ENCODE measurements at regions of chr2 and their contacts with region 1.

Region 1: DNA sequence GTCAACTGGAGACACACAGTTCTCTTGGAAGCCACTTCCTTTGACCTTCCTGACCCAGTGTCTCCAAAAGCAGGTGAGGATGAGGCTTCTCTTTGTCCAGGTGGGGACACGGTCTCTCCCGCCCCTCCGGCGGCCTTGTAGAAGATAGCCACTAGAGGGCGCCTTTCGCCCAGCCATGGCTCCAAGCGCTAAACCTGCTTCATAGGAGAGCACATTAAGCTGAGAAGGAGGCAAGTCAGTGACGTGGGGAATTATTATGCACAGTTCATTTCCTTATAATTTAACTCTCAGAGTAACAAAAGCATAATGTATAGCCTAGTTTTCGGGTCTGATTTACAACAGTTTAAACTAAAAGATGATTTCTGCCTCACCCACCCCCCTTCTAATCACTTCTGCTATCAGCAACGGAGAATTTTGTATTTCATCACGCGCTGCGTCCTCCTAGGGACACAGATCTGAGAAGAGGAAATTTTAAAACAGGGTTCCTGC is 208.7 kb downstream of the ICOS start:
- DNase-seq: peak; percentile 90
- H3K4me3 Mint-ChIP-seq: peak overlapping the region; percentile 65
- H3K27ac Mint-ChIP-seq: peak overlapping the region; percentile 22
- H3K4me1 Mint-ChIP-seq: peaks cover 9% of the 10 kb centered on the region
- H3K27me3 Mint-ChIP-seq: peaks cover 5% of the 10 kb centered on the region

Region 2: GRCh38 chr2:204239411-204240165 is 94.3 kb after region 1 on chr2:
- CTCF ChIA-PET with region 1: interaction called, 3 read pairs
- intact Hi-C with region 1: loop called (anchors 5 kb)
- DNase-seq: no peak
- H3K4me3 Mint-ChIP-seq: no peak overlapping the region
- H3K27ac Mint-ChIP-seq: no peak overlapping the region
- H3K4me1 Mint-ChIP-seq: peaks cover 14% of the 10 kb centered on the region
- H3K27me3 Mint-ChIP-seq: no peaks in the 10 kb centered on the region

Region 3: DNA sequence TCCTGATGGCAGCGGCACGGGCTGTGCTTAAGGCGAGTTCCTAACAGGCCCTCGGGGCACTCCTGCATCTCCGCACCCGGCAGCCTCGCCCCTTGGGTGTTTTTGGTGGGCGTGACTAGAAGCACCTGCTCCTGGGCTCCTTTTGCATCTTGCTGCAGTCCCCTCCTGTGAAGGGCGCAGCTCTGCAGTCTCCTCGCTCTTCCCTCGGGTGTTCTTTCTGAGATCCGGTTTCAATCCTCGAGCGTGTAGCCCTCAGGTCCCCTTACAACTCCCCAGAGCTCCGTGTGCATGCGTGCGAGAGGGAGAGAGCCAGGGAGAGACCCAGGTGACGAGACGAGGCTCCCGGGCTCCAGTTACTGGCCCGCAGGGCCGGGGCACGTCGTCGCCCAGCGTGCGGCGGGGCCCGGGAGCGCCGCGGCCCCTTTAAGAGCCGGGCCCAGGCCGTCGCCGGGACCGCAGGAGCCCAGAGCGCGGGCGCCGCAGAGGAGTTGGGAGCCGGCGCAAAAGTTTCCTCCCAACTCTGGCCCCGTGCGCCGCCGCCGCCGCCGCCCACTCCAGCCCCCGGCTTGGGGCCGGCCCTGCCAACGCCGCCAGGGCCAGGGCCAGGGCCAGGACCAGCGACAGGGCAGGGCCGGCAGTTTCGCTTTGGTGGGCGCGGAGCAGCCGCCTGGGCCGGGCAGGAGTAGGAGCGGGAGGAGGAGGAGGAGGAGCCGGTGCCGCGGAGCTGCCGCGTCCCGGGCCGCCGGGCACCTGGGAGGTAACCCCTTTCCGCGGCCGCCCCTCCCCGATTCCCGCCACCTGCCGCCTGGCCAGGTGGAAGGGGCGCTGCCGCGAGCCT is 399.9 kb after region 1 on chr2 and contains the start of gene PARD3B:
- CTCF ChIA-PET with region 1: no interaction called
- intact Hi-C with region 1: loop called (anchors 5 kb)
- DNase-seq: peak; percentile 41
- H3K4me3 Mint-ChIP-seq: peak within 1 kb of the TSS; percentile 82
- H3K27ac Mint-ChIP-seq: no peak within 1 kb of the TSS
- H3K4me1 Mint-ChIP-seq: peaks cover 12% of the 10 kb centered on the region
- H3K27me3 Mint-ChIP-seq: peaks cover 20% of the 10 kb centered on the region
- total RNA-seq, gene PARD3B: 0.15 to 0.43 TPM

Region 4: GRCh38 chr2:204691911-204692510 is 546.7 kb after region 1 on chr2:
- CTCF ChIA-PET with region 1: no interaction called
- intact Hi-C with region 1: loop called (anchors 1 kb)
- DNase-seq: peak; percentile 63
- H3K4me3 Mint-ChIP-seq: no peak overlapping the region
- H3K27ac Mint-ChIP-seq: no peak overlapping the region
- H3K4me1 Mint-ChIP-seq: peaks cover 7% of the 10 kb centered on the region
- H3K27me3 Mint-ChIP-seq: no peaks in the 10 kb centered on the region

Measured in activated naive CD4-positive, alpha-beta T cell treated with anti-CD3 and anti-CD28 coated beads for 36 hours (primary cell).